ENCODE measurements at regions of chr1 and their contacts with region 1.

Region 1: DNA sequence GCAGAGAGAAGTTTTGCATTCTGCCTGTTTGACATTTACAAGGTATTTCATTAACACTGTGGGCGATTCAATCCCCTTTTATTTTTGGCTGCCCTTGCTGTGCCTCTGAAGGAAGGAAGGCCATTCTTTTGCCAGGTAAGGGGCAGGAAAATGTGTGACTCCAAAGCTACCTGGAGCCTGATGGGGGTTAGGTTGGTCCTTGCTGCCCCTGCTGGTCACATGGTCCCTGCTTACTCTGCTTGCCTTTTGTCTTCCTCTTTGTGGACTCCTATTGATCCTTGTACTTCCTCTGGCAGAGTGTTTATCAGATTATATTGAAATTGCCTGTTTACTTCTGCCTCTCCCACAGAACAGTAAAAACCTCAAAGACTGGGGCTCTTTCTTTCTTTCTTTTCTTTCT is 65.7 kb downstream of the ST6GALNAC3 start:
- DNase-seq: no peak
- ATAC-seq: no peak
- H3K4me3 ChIP-seq: no peak overlapping the region
- H3K27ac ChIP-seq: peak overlapping the region; percentile 15 to 87 (median 76)
- H3K4me1 ChIP-seq: peaks cover 0 to 59% (median 12%) of the 10 kb centered on the region in 12 donors
- H3K27me3 ChIP-seq: no peaks in the 10 kb centered on the region
- CTCF ChIP-seq: no peak
- POLR2A ChIP-seq: no peak

Region 2: GRCh38 chr1:75884437-75884836 is 255.8 kb before region 1 on chr1:
- intact Hi-C with region 1: no loop called
- DNase-seq: no peak
- ATAC-seq: no peak
- H3K4me3 ChIP-seq: no peak overlapping the region
- H3K27ac ChIP-seq: no peak overlapping the region
- H3K4me1 ChIP-seq: no peaks in the 10 kb centered on the region
- H3K27me3 ChIP-seq: no peaks in the 10 kb centered on the region
- CTCF ChIP-seq: no peak
- POLR2A ChIP-seq: no peak

Region 3: DNA sequence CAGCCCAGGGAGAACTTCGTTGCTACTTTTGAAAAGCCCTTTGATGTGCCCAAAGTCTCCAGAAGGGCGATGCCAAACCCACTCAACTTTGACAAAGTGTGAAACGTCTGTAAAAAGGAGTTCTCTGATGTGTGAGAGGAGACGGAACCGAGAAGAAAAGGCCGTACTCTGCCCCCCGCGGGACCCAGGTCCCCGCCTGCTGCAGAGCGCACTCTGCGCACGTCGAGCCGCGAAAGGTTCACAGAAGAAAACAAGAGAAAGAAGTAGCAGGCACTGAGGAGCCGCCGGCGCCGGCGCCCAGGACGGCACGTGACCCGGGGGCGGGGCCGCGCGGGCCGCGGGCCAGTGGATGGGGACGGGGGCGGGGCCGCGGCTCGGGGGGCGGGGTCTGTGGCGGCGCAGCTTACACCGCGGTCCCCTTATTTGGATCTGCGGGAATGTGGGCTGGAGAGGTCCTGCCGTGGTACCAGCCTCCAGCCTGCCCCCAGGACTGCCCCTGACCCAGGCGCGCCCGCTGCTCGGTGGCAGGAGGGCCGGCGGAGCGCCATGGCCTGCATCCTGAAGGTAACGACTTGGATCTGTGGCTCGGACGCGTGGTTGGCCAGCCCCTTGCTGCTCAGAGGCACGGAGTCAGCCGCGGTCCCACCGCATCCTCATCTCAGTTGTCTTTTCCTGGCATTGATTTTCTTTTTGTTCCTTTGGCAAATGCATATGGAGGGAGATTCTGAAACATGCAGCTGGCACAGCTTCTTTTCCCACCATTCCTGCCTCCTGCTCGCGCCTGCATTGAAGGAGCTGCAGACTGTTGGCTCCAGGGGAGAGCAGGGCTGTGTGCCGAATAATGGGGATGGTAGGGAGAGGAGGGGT is 65.7 kb before region 1 on chr1 and contains the start of gene ST6GALNAC3:
- intact Hi-C with region 1: loop called in 5 of 10 experiments (anchors 2 to 5 kb)
- DNase-seq: peak; percentile 76 to 88 (median 77)
- ATAC-seq: peak; percentile 79 to 98 (median 94)
- H3K4me3 ChIP-seq: peak within 1 kb of the TSS; percentile 46 to 90 (median 68)
- H3K27ac ChIP-seq: peak within 1 kb of the TSS; percentile 66 to 93 (median 80)
- H3K4me1 ChIP-seq: peaks cover 0 to 28% (median 9%) of the 10 kb centered on the region in 12 donors
- H3K27me3 ChIP-seq: no peaks in the 10 kb centered on the region
- CTCF ChIP-seq: no peak
- POLR2A ChIP-seq: peak in 1 of 2 donors; percentile 75
- total RNA-seq, gene ST6GALNAC3: 2.5 to 7.7 (median 4.4) TPM

Region 4: GRCh38 chr1:76190749-76191424 is 50.7 kb after region 1 on chr1:
- intact Hi-C with region 1: no loop called
- DNase-seq: no peak
- ATAC-seq: no peak
- H3K4me3 ChIP-seq: no peak overlapping the region
- H3K27ac ChIP-seq: no peak overlapping the region
- H3K4me1 ChIP-seq: no peaks in the 10 kb centered on the region
- H3K27me3 ChIP-seq: no peaks in the 10 kb centered on the region
- CTCF ChIP-seq: no peak
- POLR2A ChIP-seq: no peak

Measured in heart left ventricle (tissue), 16 donors.